Pancreas (tissue), 10 donors: ENCODE measurements at regions of chr3 and their contacts with region 1.

Region 1: GRCh38 chr3:24264748-24265158 is 229.9 kb downstream of the THRB start:
- DNase-seq: peak in 2 of 6 donors; percentile 12 to 15
- ATAC-seq: peak in 3 of 4 donors; percentile 74 to 91 (median 82)
- H3K4me3 ChIP-seq: no peak overlapping the region
- H3K27ac ChIP-seq: no peak overlapping the region
- H3K4me1 ChIP-seq: peaks cover 0 to 5% (median 0%) of the 10 kb centered on the region in 3 donors
- H3K27me3 ChIP-seq: no peaks in the 10 kb centered on the region
- CTCF ChIP-seq: peak; percentile 42 to 57 (median 54)

Region 2: GRCh38 chr3:24359645-24360462 is 95.1 kb after region 1 on chr3:
- intact Hi-C with region 1: loop called in 1 of 3 experiments (anchors 5 kb)
- DNase-seq: peak in 1 of 6 donors; percentile 22
- ATAC-seq: peak in 3 of 4 donors; percentile 32 to 60 (median 50)
- H3K4me3 ChIP-seq: no peak overlapping the region
- H3K27ac ChIP-seq: no peak overlapping the region
- H3K4me1 ChIP-seq: peaks cover 18 to 23% (median 23%) of the 10 kb centered on the region in 3 donors
- H3K27me3 ChIP-seq: no peaks in the 10 kb centered on the region
- CTCF ChIP-seq: no peak